CD4-positive, alpha-beta T cell (primary cell): ENCODE measurements at regions of chr17 and their contacts with region 1.

Region 1: GRCh38 chr17:40474419-40475002 is 26.9 kb downstream of the TNS4 start:
- DNase-seq: no peak
- ATAC-seq: no peak
- H3K4me3 ChIP-seq: no peak overlapping the region
- H3K4me3 Mint-ChIP-seq: no peak overlapping the region
- H3K27ac ChIP-seq: no peak overlapping the region
- H3K27ac Mint-ChIP-seq: no peak overlapping the region
- H3K4me1 ChIP-seq: peaks cover 40% of the 10 kb centered on the region
- H3K4me1 Mint-ChIP-seq: peaks cover 22% of the 10 kb centered on the region
- H3K27me3 ChIP-seq: no peaks in the 10 kb centered on the region
- H3K27me3 Mint-ChIP-seq: no peaks in the 10 kb centered on the region
- CTCF ChIP-seq: no peak

Region 2: DNA sequence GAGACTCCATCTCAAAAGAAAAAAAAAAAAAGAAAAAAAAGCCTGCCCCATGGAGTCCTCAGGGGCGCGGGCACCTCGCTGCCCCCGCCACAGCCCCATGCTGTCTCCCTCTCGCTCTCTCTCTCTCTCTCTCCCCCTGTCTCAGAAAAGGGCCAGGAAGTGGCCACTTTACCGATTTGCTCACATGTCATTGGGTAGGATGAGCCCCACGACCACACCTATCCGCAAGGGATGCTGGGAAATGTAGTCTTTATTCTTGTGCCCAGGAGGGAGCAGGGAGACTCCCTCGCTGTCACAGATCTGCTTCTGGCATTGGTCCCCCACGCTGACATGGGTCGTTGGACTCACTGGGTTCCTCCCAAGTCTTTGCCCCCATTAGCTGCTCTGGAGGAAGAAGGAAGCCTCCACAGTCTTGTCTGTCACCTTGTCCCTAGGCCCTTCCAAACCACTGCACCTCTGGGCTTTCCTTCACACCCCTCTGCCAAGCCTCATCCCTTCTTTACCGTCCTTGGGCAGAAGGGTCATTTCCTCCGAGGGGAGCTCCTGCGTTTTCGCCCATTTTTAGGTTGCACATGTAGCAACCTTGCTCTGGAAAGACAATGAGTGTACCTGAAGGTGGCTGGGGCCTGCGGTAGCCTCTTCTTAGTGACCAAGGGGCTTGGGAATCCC is 103.1 kb before region 1 on chr17:
- CTCF ChIA-PET with region 1: no interaction called
- POLR2A ChIA-PET with region 1: no interaction called
- intact Hi-C with region 1: no loop called
- DNase-seq: peak in 3 of 14 experiments; percentile 56 to 74 (median 69)
- ATAC-seq: peak; percentile 88
- H3K4me3 ChIP-seq: no peak overlapping the region
- H3K4me3 Mint-ChIP-seq: no peak overlapping the region
- H3K27ac ChIP-seq: no peak overlapping the region
- H3K27ac Mint-ChIP-seq: no peak overlapping the region
- H3K4me1 ChIP-seq: peaks cover 8% of the 10 kb centered on the region
- H3K4me1 Mint-ChIP-seq: peaks cover 4% of the 10 kb centered on the region
- H3K27me3 ChIP-seq: no peaks in the 10 kb centered on the region
- H3K27me3 Mint-ChIP-seq: no peaks in the 10 kb centered on the region
- CTCF ChIP-seq: no peak

Region 3: GRCh38 chr17:40490289-40490853 is 15.9 kb after region 1 on chr17:
- CTCF ChIA-PET with region 1: interaction called, 14 read pairs
- POLR2A ChIA-PET with region 1: interaction called, 26 read pairs
- intact Hi-C with region 1: no loop called
- DNase-seq: peak in 4 of 14 experiments; percentile 11 to 48 (median 26)
- ATAC-seq: no peak
- H3K4me3 ChIP-seq: no peak overlapping the region
- H3K4me3 Mint-ChIP-seq: peak overlapping the region; percentile 48
- H3K27ac ChIP-seq: no peak overlapping the region
- H3K27ac Mint-ChIP-seq: peak overlapping the region; percentile 49
- H3K4me1 ChIP-seq: peaks cover 47% of the 10 kb centered on the region
- H3K4me1 Mint-ChIP-seq: peaks cover 62% of the 10 kb centered on the region
- H3K27me3 ChIP-seq: no peaks in the 10 kb centered on the region
- H3K27me3 Mint-ChIP-seq: no peaks in the 10 kb centered on the region
- CTCF ChIP-seq: no peak